ENCODE measurements at regions of chr9 and their contacts with region 1.

Region 1: GRCh38 chr9:19456996-19457692 is 48.3 kb downstream of the ACER2 start:
- DNase-seq: no peak

Region 2: DNA sequence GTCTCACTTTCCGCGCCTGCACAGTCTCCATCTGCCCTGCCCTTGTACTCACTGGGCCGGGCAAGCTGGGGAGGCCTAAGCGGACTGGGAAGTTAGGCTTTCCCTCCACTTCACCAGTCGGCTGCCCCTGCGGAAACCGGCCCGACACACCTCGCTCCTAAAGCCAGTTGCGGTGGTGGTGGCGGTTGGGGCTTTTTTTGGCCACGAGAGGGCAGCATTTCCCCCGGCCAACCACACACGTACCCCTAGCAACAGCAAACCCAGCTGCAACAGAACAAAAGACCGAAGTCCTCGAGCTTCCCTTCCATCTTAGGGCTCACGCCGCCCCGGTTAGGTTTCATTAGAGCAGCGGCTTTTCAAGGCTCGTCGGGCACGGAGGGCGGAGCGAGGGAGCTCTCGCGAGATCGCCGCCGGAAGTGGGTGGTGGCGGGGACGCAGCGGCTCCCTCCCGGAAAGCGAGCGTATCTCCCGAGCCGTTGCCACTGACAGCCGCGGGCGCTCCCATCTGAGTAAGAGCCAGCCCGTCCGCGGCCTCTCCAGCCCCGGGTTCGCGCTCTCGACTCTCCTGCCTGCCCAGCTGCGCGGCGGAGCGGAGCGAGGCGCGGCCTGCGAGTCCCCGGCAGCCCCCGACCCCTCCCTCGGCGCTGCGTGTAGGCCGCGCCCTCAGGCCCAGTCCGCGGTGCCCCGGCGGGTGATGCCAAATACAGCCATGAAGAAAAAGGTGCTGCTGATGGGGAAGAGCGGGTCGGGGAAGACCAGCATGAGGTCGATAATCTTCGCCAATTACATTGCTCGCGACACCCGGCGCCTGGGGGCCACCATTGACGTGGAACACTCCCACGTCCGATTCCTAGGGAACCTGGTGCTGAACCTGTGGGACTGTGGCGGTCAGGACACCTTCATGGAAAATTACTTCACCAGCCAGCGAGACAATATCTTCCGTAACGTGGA is 407.9 kb before region 1 on chr9 and contains the start of gene RRAGA:
- intact Hi-C with region 1: loop called (anchors 2 kb)
- DNase-seq: peak; percentile 96
- total RNA-seq, gene RRAGA: 86.6 TPM

Region 3: DNA sequence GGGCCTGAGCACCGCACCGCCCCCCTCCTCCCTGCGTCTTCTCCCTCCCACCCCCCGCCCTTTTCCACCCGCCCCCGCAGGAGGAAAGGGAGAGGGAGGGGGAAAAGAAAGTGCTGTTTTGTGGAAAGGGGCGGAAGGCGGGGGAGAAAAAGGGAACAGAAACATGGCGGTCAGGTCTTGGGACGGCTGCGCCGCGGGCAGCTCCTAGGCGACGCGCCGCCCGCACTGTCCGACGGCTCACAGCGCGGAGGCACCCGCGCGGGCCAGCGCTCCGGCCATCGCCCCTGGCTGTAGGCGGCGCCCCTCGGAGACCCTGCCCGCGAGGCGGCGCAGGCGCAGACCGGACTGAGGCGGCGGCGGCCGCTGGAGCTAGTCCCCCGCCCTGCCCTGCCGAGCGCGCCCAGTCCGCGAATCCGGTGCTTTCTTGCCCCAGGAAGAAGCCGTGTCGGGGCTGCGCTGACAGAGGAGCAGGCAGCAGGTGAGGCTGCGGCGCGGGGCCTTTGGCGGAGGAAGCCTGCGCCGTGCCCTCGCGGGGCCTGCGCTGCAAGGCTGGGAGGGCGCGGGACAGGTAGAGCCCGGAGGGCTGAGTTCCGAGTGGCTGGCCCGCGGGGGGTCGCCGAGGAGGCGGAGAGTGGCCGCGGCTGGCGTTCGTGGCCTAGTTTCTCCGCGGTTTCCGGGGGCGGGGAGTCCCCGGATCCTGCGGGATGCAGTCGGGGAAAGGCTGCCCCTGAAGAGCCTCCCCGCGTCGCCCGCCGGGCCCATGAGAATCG is 226.6 kb before region 1 on chr9 and contains the start of gene DENND4C:
- intact Hi-C with region 1: loop called (anchors 10 kb)
- DNase-seq: peak; percentile 91
- total RNA-seq, gene DENND4C: 21.4 TPM

Region 4: DNA sequence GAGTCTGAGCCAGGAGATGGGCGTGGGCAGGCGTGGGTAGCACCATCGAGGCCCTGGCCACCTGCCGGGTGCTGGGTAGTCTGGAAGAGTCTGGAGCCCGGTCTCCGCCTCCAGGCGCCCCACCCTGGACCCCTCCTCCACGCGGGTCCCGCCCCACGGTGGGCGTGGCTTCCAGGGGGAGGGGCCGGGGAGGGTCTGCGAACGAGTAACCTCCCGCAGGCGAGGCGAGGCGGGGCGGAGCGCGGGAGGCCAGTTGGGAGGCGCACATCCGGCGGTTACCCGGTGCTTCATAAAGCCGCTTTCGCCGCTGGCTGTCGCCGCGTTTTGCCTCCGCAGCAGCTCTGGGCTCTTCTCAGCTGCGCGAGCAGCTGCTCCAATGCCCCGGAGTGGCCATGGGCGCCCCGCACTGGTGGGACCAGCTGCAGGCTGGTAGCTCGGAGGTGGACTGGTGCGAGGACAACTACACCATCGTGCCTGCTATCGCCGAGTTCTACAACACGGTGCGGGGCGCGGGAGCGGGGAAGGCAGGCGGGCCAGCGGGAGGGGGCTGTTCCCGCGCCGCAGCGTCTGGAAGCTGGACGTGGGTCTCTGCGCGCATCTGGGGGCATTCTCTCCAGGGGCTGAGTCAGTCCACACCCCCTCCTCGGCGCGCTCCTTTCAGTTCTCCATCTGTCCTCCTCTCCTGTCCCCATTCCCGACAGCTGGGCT is 48.3 kb before region 1 on chr9 and contains the start of gene ACER2:
- intact Hi-C with region 1: loop called (anchors 2 kb)
- DNase-seq: peak; percentile 96
- total RNA-seq, gene ACER2: 4.1 TPM

Region 5: DNA sequence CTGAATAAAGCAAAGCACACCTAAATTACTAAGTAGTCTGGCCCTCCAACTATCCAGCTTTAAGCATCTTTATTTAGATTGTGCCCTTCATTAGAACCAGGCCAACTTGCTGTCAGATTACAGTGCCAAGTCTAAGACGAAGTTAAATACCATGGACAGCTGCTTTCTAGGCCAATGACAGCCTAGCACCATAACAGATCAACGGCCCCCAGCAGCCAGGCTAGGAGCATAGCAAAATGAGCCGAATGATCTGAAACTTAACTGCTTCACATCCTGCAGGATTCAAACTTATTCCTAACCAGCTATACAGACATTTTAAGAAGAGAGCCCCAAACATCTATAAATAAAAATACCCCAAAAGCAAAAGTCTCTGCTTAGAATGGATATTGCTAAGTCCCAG is 324.9 kb after region 1 on chr9:
- intact Hi-C with region 1: no loop called
- DNase-seq: no peak

Measured in cardiac septum (tissue), 1 donor.